A673 (cell line): ENCODE measurements at regions of chr2 and their contacts with region 1.

Region 1: GRCh38 chr2:24101992-24102391 is 17.4 kb upstream of the TP53I3 start:
- DNase-seq: peak; percentile 1
- H3K4me3 ChIP-seq: no peak overlapping the region
- H3K27ac ChIP-seq: no peak overlapping the region
- H3K4me1 ChIP-seq: no peaks in the 10 kb centered on the region
- H3K27me3 ChIP-seq: no peaks in the 10 kb centered on the region
- CTCF ChIP-seq: no peak

Region 2: GRCh38 chr2:23926750-23927571 is 175.0 kb before region 1 on chr2 and contains the start of gene ATAD2B:
- CTCF ChIA-PET with region 1: no interaction called
- POLR2A ChIA-PET with region 1: no interaction called
- intact Hi-C with region 1: no loop called
- DNase-seq: peak; percentile 97
- H3K4me3 ChIP-seq: peak within 1 kb of the TSS; percentile 99
- H3K27ac ChIP-seq: peak within 1 kb of the TSS; percentile 99
- H3K4me1 ChIP-seq: peaks cover 10% of the 10 kb centered on the region
- H3K27me3 ChIP-seq: no peaks in the 10 kb centered on the region
- CTCF ChIP-seq: peak; percentile 77
- total RNA-seq, gene ATAD2B: 27.9 and 28.5 TPM in 2 replicates

Region 3: GRCh38 chr2:24075915-24076848 is 25.8 kb before region 1 on chr2 and contains the start of gene SF3B6:
- CTCF ChIA-PET with region 1: no interaction called
- POLR2A ChIA-PET with region 1: interaction called, 23 read pairs
- intact Hi-C with region 1: no loop called
- DNase-seq: peak; percentile 100
- H3K4me3 ChIP-seq: peak within 1 kb of the TSS; percentile 82
- H3K27ac ChIP-seq: peak within 1 kb of the TSS; percentile 67
- H3K4me1 ChIP-seq: peaks cover 7% of the 10 kb centered on the region
- H3K27me3 ChIP-seq: no peaks in the 10 kb centered on the region
- CTCF ChIP-seq: no peak
- total RNA-seq, gene SF3B6: 123 and 130 TPM in 2 replicates

Region 4: DNA sequence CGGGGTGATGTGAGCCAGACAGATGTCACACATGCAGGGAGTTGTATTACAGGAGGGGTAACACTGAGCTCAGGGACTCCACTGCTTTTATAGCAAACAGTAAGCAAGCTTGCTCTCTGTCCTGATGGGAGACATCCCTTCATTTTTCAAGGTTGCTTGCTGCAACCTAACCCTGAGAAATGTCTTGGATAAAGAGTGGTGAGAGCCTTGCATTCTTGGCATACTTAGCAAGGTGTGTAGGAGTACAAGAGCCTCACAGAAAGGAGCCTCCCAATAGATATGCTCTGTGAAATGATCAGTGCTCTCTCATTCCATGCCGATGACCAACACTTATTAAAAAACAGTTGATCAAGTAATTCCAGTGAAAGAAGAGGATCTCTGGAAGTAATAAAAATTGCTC is 13.1 kb after region 1 on chr2:
- CTCF ChIA-PET with region 1: no interaction called
- POLR2A ChIA-PET with region 1: no interaction called
- intact Hi-C with region 1: no loop called
- DNase-seq: no peak
- H3K4me3 ChIP-seq: no peak overlapping the region
- H3K27ac ChIP-seq: no peak overlapping the region
- H3K4me1 ChIP-seq: no peaks in the 10 kb centered on the region
- H3K27me3 ChIP-seq: no peaks in the 10 kb centered on the region
- CTCF ChIP-seq: no peak